ENCODE measurements at regions of chr12 and their contacts with region 1.

Region 1: GRCh38 chr12:62813031-62813829 is 121.7 kb downstream of the PPM1H start:
- DNase-seq: peak; percentile 29 to 65 (median 40)
- ATAC-seq: peak; percentile 81
- H3K4me3 ChIP-seq: no peak overlapping the region
- H3K27ac ChIP-seq: no peak overlapping the region
- H3K4me1 ChIP-seq: peaks cover 0 to 11% of the 10 kb centered on the region in 2 experiments; a peak in 3 of 5 replicates
- H3K27me3 ChIP-seq: no peaks in the 10 kb centered on the region; a peak in 1 of 5 replicates
- CTCF ChIP-seq: peak; percentile 58 to 74 (median 61)
- EP300 ChIP-seq: no peak
- POLR2A ChIP-seq: no peak
- RAD21 ChIP-seq: peak in 1 of 2 experiments; percentile 54; a peak in 3 of 4 replicates

Region 2: GRCh38 chr12:62537551-62537950 is 275.7 kb before region 1 on chr12:
- CTCF ChIA-PET with region 1: no interaction called
- POLR2A ChIA-PET with region 1: no interaction called
- in situ Hi-C with region 1: no loop called
- intact Hi-C with region 1: no loop called
- DNase-seq: peak in 1 of 4 experiments; percentile 19
- ATAC-seq: no peak
- H3K4me3 ChIP-seq: no peak overlapping the region
- H3K27ac ChIP-seq: no peak overlapping the region
- H3K4me1 ChIP-seq: no peaks in the 10 kb centered on the region
- H3K27me3 ChIP-seq: no peaks in the 10 kb centered on the region
- CTCF ChIP-seq: no peak
- EP300 ChIP-seq: no peak
- POLR2A ChIP-seq: no peak
- RAD21 ChIP-seq: no peak

Region 3: DNA sequence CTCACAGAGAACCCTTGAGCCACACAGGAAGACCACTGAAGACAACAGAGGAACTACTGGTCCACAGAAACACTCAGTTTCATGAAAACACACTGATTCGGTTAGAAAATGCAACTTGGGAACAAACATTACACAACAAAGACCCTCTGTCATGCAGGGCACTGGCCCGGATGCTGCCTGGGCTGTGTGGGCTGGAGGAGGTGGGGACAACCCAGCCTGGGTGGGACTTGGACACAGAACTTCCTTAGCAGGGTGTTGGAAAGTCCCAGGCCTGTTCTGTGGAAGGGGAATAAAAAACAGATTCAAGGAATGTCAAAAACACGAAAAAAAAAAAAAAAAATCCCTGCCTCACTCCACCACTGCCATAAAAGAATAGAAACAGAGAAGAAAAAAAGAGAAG is 165.6 kb before region 1 on chr12:
- CTCF ChIA-PET with region 1: no interaction called
- POLR2A ChIA-PET with region 1: no interaction called
- in situ Hi-C with region 1: no loop called
- intact Hi-C with region 1: no loop called
- DNase-seq: no peak
- ATAC-seq: no peak
- H3K4me3 ChIP-seq: no peak overlapping the region
- H3K27ac ChIP-seq: no peak overlapping the region
- H3K4me1 ChIP-seq: no peaks in the 10 kb centered on the region
- H3K27me3 ChIP-seq: no peaks in the 10 kb centered on the region
- CTCF ChIP-seq: no peak
- EP300 ChIP-seq: no peak
- POLR2A ChIP-seq: no peak
- RAD21 ChIP-seq: no peak

Region 4: DNA sequence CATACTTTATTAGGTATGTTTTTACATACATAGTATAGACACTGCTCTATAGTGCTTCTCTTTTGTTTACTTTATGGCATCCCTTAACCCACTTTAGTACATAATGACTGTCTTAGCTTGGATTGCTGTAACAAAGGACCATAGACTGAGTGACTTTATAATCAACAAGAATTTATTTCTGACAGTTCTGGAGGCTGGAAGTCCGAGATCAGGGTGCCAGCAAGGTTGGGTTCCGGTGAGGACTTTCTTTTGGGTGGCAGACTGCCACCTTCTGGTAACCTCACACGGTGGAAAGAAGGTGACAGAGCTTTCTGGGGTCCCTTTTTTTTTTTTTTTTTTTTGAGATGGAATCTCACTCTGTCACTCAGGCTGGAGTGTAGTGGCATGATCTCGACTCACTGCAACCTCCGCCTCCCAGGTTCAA is 170.4 kb after region 1 on chr12:
- CTCF ChIA-PET with region 1: no interaction called
- POLR2A ChIA-PET with region 1: no interaction called
- in situ Hi-C with region 1: no loop called
- intact Hi-C with region 1: loop called (anchors 5 kb)
- DNase-seq: peak in 1 of 4 experiments; percentile 56
- ATAC-seq: peak; percentile 85
- H3K4me3 ChIP-seq: no peak overlapping the region
- H3K27ac ChIP-seq: no peak overlapping the region
- H3K4me1 ChIP-seq: no peaks in the 10 kb centered on the region
- H3K27me3 ChIP-seq: no peaks in the 10 kb centered on the region
- CTCF ChIP-seq: peak; percentile 21 to 58 (median 49); a peak in 4 of 6 replicates
- EP300 ChIP-seq: no peak
- POLR2A ChIP-seq: no peak
- RAD21 ChIP-seq: peak; percentile 19 to 51; a peak in 2 of 4 replicates